GM12878 (cell line): ENCODE measurements at regions of chr3 and their contacts with region 1.

Region 1: DNA sequence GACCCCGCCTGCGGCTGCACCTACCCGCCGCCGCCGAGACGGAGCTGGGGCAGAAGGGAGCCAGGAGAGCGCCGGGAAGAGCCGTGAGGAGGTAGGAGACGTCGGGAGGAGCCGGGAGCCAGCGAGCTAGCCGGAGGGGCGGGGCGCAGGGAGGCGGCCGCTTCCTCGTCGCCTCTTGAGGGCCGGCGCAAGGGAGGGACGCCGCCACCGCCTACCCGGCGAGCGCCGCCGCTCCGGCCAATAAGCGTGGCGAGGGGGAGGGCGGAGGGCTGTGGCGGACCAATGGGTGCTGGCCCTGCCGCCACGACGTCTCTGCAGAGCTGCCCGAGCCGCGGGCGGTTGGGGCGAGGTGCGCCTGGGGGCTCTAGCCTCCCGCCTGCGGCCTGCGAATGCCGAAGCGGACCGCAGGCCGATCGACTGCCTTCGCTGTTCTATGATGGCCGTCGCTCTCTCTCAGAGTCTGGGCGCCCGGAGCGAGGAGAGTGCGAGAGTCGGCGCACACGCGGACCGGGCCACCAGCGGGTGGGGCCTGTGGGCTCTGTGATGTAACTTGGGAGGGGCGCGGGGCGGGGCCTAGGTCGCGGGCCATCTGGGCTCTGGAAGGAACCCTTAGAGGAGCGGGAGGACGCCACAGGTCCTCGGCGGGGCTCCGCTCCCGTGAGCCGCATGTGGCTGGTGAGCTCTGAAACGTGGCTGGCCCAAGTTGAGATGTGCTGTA is 72.7 kb upstream of the MAP4 start:
- DNase-seq: peak; percentile 81
- ATAC-seq: peak; percentile 96
- H3K4me3 ChIP-seq: peak overlapping the region; percentile 87
- H3K27ac ChIP-seq: peak overlapping the region; percentile 79
- H3K4me1 ChIP-seq: peaks cover 6% of the 10 kb centered on the region; the same call in 1 of the 2 replicates
- H3K27me3 ChIP-seq: no peaks in the 10 kb centered on the region
- CTCF ChIP-seq: no peak
- EP300 ChIP-seq: no peak
- POLR2A ChIP-seq: peak; percentile 96
- RAD21 ChIP-seq: no peak

Region 2: DNA sequence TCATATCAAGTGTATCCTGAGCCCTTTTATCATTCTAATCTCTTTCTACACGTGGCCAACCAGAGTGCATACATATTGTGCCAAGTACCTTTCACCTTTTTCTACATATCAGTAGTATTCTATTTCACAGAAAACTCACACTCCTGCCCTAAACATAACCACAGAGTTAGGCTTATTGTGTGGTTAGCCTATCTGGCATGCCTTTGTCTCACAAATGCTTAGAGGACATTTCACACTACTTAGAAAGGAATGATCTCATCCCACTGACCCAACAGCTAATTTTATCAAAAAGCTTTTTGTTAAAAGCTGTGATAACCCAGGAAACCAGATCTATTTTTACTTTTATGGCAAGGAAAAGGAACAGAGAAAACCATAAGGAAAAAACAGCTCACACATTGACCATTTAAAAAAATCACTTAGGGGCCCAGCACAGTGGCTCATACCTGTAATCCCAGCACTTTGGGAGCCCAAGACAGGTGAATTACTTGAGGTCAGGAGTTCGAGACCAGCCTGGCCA is 54.9 kb before region 1 on chr3:
- CTCF ChIA-PET with region 1: interaction called, 4 read pairs
- POLR2A ChIA-PET with region 1: interaction called, 3 read pairs
- RAD21 ChIA-PET with region 1: interaction called, 4 read pairs
- SMC1A ChIA-PET with region 1: interaction called, 12 read pairs
- in situ Hi-C with region 1: no loop called
- intact Hi-C with region 1: no loop called
- DNase-seq: no peak
- ATAC-seq: peak; percentile 81
- H3K4me3 ChIP-seq: no peak overlapping the region
- H3K27ac ChIP-seq: peak overlapping the region; percentile 37; the same call in 1 of the 2 replicates
- H3K4me1 ChIP-seq: peaks cover 13% of the 10 kb centered on the region
- H3K27me3 ChIP-seq: no peaks in the 10 kb centered on the region
- CTCF ChIP-seq: no peak
- EP300 ChIP-seq: 0 out of 4 replicates have a peak, but pooled peaks of 1 of the 2 experiments have one; percentile 18
- POLR2A ChIP-seq: no peak
- RAD21 ChIP-seq: no peak

Region 3: GRCh38 chr3:48067271-48067670 is 21.6 kb before region 1 on chr3:
- CTCF ChIA-PET with region 1: no interaction called
- POLR2A ChIA-PET with region 1: no interaction called
- RAD21 ChIA-PET with region 1: no interaction called
- SMC1A ChIA-PET with region 1: no interaction called
- in situ Hi-C with region 1: no loop called
- intact Hi-C with region 1: no loop called
- DNase-seq: no peak
- ATAC-seq: no peak
- H3K4me3 ChIP-seq: no peak overlapping the region
- H3K27ac ChIP-seq: no peak overlapping the region
- H3K4me1 ChIP-seq: no peaks in the 10 kb centered on the region
- H3K27me3 ChIP-seq: no peaks in the 10 kb centered on the region
- CTCF ChIP-seq: no peak
- EP300 ChIP-seq: no peak
- POLR2A ChIP-seq: no peak
- RAD21 ChIP-seq: no peak

Region 4: GRCh38 chr3:48112813-48113212 is 23.9 kb after region 1 on chr3:
- CTCF ChIA-PET with region 1: interaction called, 3 read pairs
- POLR2A ChIA-PET with region 1: interaction called, 6 read pairs
- RAD21 ChIA-PET with region 1: interaction called, 12 read pairs
- SMC1A ChIA-PET with region 1: interaction called, 6 read pairs
- in situ Hi-C with region 1: no loop called
- intact Hi-C with region 1: no loop called
- DNase-seq: no peak
- ATAC-seq: no peak; the same call in 2 of the 3 replicates
- H3K4me3 ChIP-seq: peak overlapping the region; percentile 18; the same call in 1 of the 2 replicates
- H3K27ac ChIP-seq: peak overlapping the region; percentile 57
- H3K4me1 ChIP-seq: peaks cover 13% of the 10 kb centered on the region
- H3K27me3 ChIP-seq: no peaks in the 10 kb centered on the region
- CTCF ChIP-seq: no peak
- EP300 ChIP-seq: no peak
- POLR2A ChIP-seq: no peak
- RAD21 ChIP-seq: no peak